Endothelial cell of umbilical vein (primary cell): ENCODE measurements at regions of chrX and their contacts with region 1.

Region 1: DNA sequence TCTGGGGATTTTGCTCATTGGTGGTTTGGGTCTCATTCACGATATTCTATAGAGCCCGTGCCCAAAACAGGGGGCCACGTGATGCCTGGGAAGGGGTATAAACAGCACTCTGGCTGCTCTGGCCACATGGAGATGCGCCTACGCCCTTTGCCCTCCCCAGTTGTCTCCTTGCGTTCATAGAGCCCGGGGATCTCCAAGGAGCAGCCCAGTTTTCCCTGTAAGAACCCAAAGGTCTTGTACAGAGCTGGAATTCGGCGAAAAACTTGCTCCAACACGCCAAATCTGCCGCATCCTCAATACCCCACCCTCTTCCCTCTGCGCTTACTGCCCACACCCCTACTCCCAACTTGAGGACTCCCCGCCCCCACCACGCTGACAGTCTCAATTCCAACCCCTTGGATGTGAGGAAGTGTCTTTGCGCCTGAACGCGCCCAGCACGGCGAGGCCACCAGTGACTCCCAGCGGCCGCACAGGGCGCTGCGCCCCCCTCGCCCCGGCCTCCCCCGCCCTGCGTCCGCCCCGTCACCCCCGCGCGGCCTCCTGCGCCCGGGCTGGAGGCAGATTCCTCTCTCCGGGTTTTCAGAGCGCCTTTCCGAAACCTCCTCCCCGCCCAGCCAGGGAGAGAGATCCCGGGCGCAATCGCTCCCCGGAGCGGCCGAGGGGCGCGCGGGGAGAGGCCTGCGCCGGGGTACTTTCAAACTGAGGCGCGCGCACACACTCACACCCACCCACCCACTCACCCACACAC is at the start of gene NHS:
- DNase-seq: peak; percentile 15
- H3K4me3 ChIP-seq: peak within 1 kb of the TSS in 1 of 3 experiments; percentile 30
- H3K27ac ChIP-seq: no peak within 1 kb of the TSS
- H3K4me1 ChIP-seq: no peaks in the 10 kb centered on the region
- H3K27me3 ChIP-seq: peaks cover 13 to 29% of the 10 kb centered on the region in 2 experiments
- CTCF ChIP-seq: peak in 1 of 2 donors; percentile 25
- POLR2A ChIP-seq: no peak
- total RNA-seq, gene NHS: 0.46 and 1.1 TPM in 2 replicates

Region 2: DNA sequence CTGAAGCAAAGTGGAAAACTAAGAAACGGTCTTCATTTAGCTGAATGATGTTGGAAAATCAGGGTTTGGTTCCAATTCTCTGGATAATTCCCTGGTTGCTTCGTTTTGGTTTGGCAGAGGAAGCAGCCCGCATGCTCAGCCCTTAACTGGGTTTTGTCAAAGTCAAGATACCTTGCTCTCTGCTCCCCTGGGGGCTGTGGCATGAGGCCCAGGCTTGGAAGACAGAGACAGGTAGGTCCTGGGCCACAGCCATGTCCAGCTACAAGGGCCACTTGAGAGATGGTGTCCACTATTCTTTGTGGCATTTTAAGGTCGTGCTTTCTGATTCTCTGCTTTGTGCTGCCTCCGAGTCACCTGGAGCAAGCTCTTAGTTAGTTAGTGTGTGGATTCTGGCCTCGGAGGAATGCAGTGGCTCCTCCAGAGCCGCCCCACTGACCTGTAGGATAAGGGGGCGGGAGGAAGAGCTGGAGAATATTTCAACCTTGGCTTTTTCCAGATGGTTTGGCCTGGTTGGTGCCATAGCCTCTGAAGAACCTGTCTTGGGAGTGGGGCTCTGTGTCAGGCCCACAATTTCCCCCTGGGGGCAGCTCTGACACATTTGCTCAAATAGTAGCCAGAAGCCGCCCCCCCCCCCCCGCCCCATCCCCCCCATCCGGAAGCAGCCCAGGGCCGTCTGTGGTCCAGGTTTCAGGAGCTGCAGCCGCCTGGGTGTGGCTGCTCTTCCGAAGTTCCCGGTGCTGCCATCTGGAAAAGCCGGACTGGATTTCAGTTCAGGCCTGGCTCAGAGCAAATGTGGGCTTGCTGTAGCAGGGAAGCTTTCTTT is 147.3 kb after region 1 on chrX:
- CTCF ChIA-PET with region 1: no interaction called
- POLR2A ChIA-PET with region 1: no interaction called
- dilution Hi-C with region 1: no loop called
- intact Hi-C with region 1: loop called (anchors 5 kb)
- DNase-seq: no peak
- H3K4me3 ChIP-seq: no peak overlapping the region
- H3K27ac ChIP-seq: no peak overlapping the region
- H3K4me1 ChIP-seq: no peaks in the 10 kb centered on the region
- H3K27me3 ChIP-seq: no peaks in the 10 kb centered on the region
- CTCF ChIP-seq: no peak
- POLR2A ChIP-seq: no peak